ENCODE measurements at regions of chr17 and their contacts with region 1.

Region 1: DNA sequence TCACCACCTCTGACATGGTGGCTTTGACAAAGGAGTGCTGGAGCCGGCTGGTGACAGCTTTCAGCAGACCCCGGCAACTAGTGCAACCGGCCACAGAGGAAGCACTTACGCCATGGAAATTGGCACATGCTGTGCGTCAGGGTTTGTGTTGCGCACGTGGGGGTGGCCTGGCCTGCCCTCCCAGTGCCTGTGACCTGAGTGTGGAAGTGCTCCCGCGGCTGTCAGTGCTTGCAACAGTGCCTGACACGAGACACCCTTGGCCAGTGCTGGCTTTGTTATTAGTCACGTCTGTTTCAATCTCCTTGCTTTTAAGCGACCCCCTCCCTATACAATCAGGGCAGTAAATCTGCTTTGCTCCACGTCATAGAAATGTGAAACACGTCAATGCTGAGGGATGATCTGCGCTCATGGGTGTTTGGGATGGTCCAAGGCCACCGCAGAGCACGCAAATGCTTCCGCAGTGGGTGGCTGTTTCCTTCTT is 64.2 kb downstream of the PGS1 start:
- DNase-seq: no peak
- ATAC-seq: no peak
- H3K4me3 ChIP-seq: no peak overlapping the region
- H3K27ac ChIP-seq: no peak overlapping the region
- H3K4me1 ChIP-seq: peaks cover 0 to 8% of the 10 kb centered on the region in 2 experiments; a peak in 3 of 5 replicates
- H3K27me3 ChIP-seq: peaks cover 30 to 57% of the 10 kb centered on the region in 2 experiments
- CTCF ChIP-seq: no peak
- EP300 ChIP-seq: no peak
- POLR2A ChIP-seq: no peak
- RAD21 ChIP-seq: no peak

Region 2: DNA sequence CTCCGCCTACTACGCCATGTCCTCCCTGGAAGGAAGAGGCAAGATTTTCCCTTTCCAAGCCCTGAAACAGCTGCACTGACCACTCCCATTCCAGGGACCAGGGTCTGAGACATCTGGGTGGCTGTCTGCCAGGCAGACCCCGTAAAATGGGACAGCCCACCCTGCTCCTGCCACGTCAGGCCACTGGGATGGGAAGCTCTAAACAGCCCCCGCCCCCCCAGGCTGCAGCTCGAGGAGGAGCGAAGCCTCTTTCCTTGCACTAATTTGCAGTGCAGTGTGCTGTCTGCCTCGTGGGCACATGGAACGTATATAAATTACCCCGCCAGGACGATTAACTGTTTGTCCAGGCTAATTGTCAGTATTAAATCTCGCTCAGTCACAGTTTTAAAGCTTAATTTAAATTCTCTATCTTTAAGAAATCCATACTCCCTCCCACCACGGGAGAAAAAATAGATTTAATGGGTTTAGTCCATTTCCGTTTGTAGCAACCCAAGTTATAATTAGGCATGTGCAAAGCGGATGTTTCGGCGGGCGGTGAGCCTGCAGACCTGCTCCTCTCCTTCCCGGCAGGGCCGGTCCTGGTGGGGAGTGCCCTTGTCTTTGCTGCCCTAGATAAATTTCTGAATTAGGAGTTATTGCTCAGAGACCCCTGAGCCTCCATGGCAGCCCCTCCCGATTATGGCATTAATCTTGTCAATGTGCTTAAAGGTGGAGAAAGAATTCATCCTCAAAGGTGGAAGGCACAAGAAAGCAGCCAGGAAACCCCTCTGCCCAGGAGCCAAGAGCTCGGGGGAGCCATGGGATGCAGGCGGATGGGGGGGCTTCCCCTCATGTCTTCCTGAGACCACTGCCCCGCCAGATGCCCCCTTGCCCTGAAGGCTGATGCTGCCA is 752.2 kb before region 1 on chr17:
- CTCF ChIA-PET with region 1: no interaction called
- POLR2A ChIA-PET with region 1: no interaction called
- in situ Hi-C with region 1: no loop called
- intact Hi-C with region 1: no loop called
- DNase-seq: no peak
- ATAC-seq: no peak
- H3K4me3 ChIP-seq: no peak overlapping the region
- H3K27ac ChIP-seq: no peak overlapping the region
- H3K4me1 ChIP-seq: no peaks in the 10 kb centered on the region
- H3K27me3 ChIP-seq: peaks cover 32 to 62% of the 10 kb centered on the region in 2 experiments
- CTCF ChIP-seq: no peak
- EP300 ChIP-seq: no peak
- POLR2A ChIP-seq: no peak
- RAD21 ChIP-seq: no peak

Region 3: GRCh38 chr17:78708510-78708973 is 265.9 kb after region 1 on chr17:
- CTCF ChIA-PET with region 1: no interaction called
- POLR2A ChIA-PET with region 1: no interaction called
- in situ Hi-C with region 1: no loop called
- intact Hi-C with region 1: loop called (anchors 10 kb)
- DNase-seq: peak; percentile 59 to 62 (median 60)
- ATAC-seq: peak; percentile 82
- H3K4me3 ChIP-seq: no peak overlapping the region
- H3K27ac ChIP-seq: no peak overlapping the region
- H3K4me1 ChIP-seq: peaks cover 5 to 21% of the 10 kb centered on the region in 2 experiments; a peak in 4 of 5 replicates
- H3K27me3 ChIP-seq: no peaks in the 10 kb centered on the region
- CTCF ChIP-seq: peak; percentile 70 to 74 (median 71)
- EP300 ChIP-seq: no peak
- POLR2A ChIP-seq: no peak
- RAD21 ChIP-seq: peak; percentile 68 to 76

Region 4: DNA sequence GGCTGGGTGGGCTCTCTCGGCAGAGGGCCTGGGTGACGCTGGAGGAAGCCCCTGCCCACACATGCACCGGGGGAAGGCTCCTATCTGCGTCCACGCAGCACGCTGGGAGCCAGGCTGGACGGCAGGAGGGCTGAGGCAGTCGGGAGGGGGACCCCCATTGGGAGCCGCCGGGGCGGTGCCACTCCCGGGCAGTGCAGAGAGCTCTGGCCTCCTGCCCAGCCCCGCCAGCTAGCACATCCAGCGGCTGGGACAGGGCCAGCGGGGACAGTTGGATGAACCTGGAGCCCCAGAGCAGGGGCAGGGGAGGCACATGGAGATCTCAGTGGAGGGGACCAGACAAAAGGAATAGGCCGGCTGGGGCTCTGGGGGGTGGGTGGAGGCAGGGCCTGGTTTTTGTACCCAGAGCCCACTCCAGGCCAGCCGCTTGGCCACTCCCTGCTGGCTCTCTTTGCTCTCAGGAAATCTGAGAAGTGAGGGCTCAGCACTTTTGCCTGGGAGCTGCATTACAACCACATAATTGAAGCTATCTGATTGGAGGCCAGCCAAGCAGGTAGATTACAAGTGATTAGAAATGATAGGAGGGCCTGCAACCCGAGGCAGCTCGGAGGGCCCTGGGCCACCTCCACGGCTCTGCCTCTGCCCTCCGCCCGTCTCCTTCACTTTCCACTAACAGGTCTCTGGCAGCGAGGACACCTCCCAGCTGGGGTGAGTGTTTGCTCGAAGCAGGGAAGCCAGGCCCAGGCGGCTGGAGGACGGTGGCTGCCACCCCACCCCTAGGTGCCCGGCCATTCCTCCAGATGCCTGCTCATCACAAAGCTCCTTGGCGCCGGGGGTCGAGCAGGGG is 672.0 kb after region 1 on chr17:
- CTCF ChIA-PET with region 1: no interaction called
- POLR2A ChIA-PET with region 1: no interaction called
- in situ Hi-C with region 1: no loop called
- intact Hi-C with region 1: no loop called
- DNase-seq: no peak
- ATAC-seq: no peak
- H3K4me3 ChIP-seq: no peak overlapping the region
- H3K27ac ChIP-seq: no peak overlapping the region
- H3K4me1 ChIP-seq: peaks cover 0 to 14% of the 10 kb centered on the region in 2 experiments; a peak in 2 of 5 replicates
- H3K27me3 ChIP-seq: peaks cover 0 to 89% of the 10 kb centered on the region in 2 experiments; a peak in 4 of 5 replicates
- CTCF ChIP-seq: no peak
- EP300 ChIP-seq: no peak
- POLR2A ChIP-seq: no peak
- RAD21 ChIP-seq: no peak

Measured in K562 (cell line).